Right ventricle myocardium superior (tissue), 1 donor: ENCODE measurements at regions of chr21 and their contacts with region 1.

Region 1: DNA sequence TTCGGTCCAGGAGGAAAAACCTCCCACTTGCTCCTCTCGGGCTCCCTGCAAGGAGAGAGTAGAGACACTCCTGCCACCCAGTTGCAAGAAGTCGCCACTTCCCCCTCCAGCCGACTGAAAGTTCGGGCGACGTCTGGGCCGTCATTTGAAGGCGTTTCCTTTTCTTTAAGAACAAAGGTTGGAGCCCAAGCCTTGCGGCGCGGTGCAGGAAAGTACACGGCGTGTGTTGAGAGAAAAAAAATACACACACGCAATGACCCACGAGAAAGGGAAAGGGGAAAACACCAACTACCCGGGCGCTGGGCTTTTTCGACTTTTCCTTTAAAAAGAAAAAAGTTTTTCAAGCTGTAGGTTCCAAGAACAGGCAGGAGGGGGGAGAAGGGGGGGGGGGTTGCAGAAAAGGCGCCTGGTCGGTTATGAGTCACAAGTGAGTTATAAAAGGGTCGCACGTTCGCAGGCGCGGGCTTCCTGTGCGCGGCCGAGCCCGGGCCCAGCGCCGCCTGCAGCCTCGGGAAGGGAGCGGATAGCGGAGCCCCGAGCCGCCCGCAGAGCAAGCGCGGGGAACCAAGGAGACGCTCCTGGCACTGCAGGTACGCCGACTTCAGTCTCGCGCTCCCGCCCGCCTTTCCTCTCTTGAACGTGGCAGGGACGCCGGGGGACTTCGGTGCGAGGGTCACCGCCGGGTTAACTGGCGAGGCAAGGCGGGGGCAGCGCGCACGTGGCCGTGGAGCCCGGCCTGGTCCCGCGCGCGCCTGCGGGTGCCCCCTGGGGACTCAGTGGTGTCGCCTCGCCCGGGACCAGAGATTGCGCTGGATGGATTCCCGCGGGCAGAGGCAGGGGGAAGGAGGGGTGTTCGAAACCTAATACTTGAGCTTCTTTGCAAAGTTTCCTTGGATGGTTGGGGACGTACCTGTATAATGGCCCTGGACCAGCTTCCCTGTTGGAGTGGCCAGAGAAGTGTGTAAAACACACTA is 45.3 kb downstream of the MRPL39 start:
- DNase-seq: peak; percentile 63
- ATAC-seq: peak; percentile 79

Region 2: GRCh38 chr21:25421327-25422028 is 140.5 kb before region 1 on chr21:
- intact Hi-C with region 1: loop called (anchors 10 kb)
- DNase-seq: no peak
- ATAC-seq: no peak

Region 3: DNA sequence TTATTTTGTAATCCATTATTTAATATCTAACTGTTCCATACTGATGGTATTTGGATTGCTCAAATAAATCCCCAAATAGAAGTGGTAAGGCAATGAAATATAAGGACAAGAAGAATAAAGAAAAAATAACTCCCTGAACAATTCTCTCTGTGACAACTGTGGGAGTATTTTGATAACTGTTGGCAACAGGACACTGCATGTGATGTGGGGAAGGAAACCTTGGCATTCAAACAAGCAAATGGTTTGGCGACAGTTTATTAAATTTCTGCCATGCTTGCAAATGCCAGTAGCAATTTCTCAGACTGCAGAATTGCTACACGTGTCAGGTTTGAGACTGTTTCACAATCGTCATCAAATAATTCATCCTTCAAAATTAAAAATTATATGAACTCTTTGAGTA is 53.9 kb after region 1 on chr21:
- intact Hi-C with region 1: no loop called
- DNase-seq: no peak
- ATAC-seq: peak; percentile 90